ENCODE measurements at regions of chr6 and their contacts with region 1.

Region 1: GRCh38 chr6:53171605-53172446 is 23.2 kb upstream of the GCM1 start:
- DNase-seq: peak; percentile 99
- H3K4me3 ChIP-seq: peak overlapping the region in 1 of 8 donors; percentile 38
- H3K27ac ChIP-seq: peak overlapping the region in 5 of 8 donors; percentile 48 to 76 (median 58)
- H3K4me1 ChIP-seq: peaks cover 0 to 28% (median 12%) of the 10 kb centered on the region in 6 donors
- H3K27me3 ChIP-seq: no peaks in the 10 kb centered on the region
- CTCF ChIP-seq: peak; percentile 100
- POLR2A ChIP-seq: no peak

Region 2: DNA sequence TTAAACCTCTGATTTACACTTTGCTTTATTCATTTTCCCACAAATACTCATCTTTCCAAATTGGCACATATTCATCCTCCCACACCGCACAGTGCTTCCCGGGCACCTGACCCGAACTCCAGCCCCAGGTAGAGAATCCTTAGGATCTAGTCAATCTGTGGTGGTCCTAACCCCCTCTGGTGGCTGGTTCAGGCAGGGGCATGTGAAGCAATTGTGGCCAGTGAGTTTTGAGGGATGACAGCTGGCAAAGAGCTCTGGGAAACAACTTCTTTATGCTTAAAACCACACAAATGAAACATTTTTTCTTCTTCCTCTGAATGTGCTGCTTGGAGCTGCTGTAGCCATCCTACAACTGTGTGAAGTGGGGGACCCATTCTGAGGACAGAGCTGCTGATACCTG is 122.3 kb after region 1 on chr6:
- intact Hi-C with region 1: loop called (anchors 5 kb)
- DNase-seq: no peak
- H3K4me3 ChIP-seq: no peak overlapping the region
- H3K27ac ChIP-seq: peak overlapping the region in 4 of 8 donors; percentile 2 to 57 (median 29)
- H3K4me1 ChIP-seq: peaks cover 21 to 100% (median 84%) of the 10 kb centered on the region in 6 donors
- H3K27me3 ChIP-seq: no peaks in the 10 kb centered on the region
- CTCF ChIP-seq: peak in 10 of 11 experiments; percentile 25 to 79 (median 64)
- POLR2A ChIP-seq: no peak

Region 3: GRCh38 chr6:53437557-53438202 is 265.9 kb after region 1 on chr6:
- intact Hi-C with region 1: loop called (anchors 10 kb)
- DNase-seq: no peak
- H3K4me3 ChIP-seq: no peak overlapping the region
- H3K27ac ChIP-seq: no peak overlapping the region
- H3K4me1 ChIP-seq: peaks cover 0 to 36% (median 12%) of the 10 kb centered on the region in 6 donors
- H3K27me3 ChIP-seq: no peaks in the 10 kb centered on the region
- CTCF ChIP-seq: peak in 10 of 11 experiments; percentile 24 to 66 (median 51)
- POLR2A ChIP-seq: no peak

Region 4: GRCh38 chr6:53484476-53485280 is 312.9 kb after region 1 on chr6:
- intact Hi-C with region 1: loop called (anchors 2 kb)
- DNase-seq: no peak
- H3K4me3 ChIP-seq: peak overlapping the region in 2 of 8 donors; percentile 5 to 21
- H3K27ac ChIP-seq: peak overlapping the region in 6 of 8 donors; percentile 5 to 80 (median 64)
- H3K4me1 ChIP-seq: peaks cover 16 to 52% (median 34%) of the 10 kb centered on the region in 6 donors
- H3K27me3 ChIP-seq: peaks cover 0 to 7% (median 0%) of the 10 kb centered on the region in 7 donors
- CTCF ChIP-seq: peak; percentile 78 to 98 (median 92)
- POLR2A ChIP-seq: no peak

Region 5: GRCh38 chr6:53651764-53652401 is 480.1 kb after region 1 on chr6:
- intact Hi-C with region 1: loop called (anchors 10 kb)
- DNase-seq: peak; percentile 95
- H3K4me3 ChIP-seq: peak overlapping the region; percentile 50 to 79 (median 62)
- H3K27ac ChIP-seq: peak overlapping the region; percentile 55 to 82 (median 78)
- H3K4me1 ChIP-seq: peaks cover 17 to 43% (median 32%) of the 10 kb centered on the region in 6 donors
- H3K27me3 ChIP-seq: peaks cover 0 to 12% (median 0%) of the 10 kb centered on the region in 7 donors
- CTCF ChIP-seq: peak in 10 of 11 experiments; percentile 19 to 66 (median 46)
- POLR2A ChIP-seq: no peak

Region 6: GRCh38 chr6:53725791-53726431 is 554.1 kb after region 1 on chr6:
- intact Hi-C with region 1: loop called (anchors 10 kb)
- DNase-seq: peak; percentile 93
- H3K4me3 ChIP-seq: no peak overlapping the region
- H3K27ac ChIP-seq: no peak overlapping the region
- H3K4me1 ChIP-seq: peaks cover 0 to 15% (median 7%) of the 10 kb centered on the region in 6 donors
- H3K27me3 ChIP-seq: peaks cover 0 to 14% (median 0%) of the 10 kb centered on the region in 7 donors
- CTCF ChIP-seq: peak; percentile 80 to 97 (median 93)
- POLR2A ChIP-seq: no peak